ENCODE measurements at regions of chr7 and their contacts with region 1.

Region 1: GRCh38 chr7:44885394-44886317 is at the start of gene PURB:
- DNase-seq: peak; percentile 99
- H3K4me3 Mint-ChIP-seq: peak within 1 kb of the TSS; percentile 97
- H3K27ac Mint-ChIP-seq: peak within 1 kb of the TSS; percentile 99
- H3K4me1 Mint-ChIP-seq: peaks cover 42% of the 10 kb centered on the region
- H3K27me3 Mint-ChIP-seq: no peaks in the 10 kb centered on the region
- total RNA-seq, gene PURB: 41.4 and 41.5 TPM in 2 replicates

Region 2: GRCh38 chr7:44606450-44607254 is 279.0 kb before region 1 on chr7 and contains the start of gene OGDH:
- intact Hi-C with region 1: loop called (anchors 1 kb)
- DNase-seq: peak; percentile 100
- H3K4me3 Mint-ChIP-seq: peak within 1 kb of the TSS; percentile 99
- H3K27ac Mint-ChIP-seq: peak within 1 kb of the TSS; percentile 100
- H3K4me1 Mint-ChIP-seq: peaks cover 30% of the 10 kb centered on the region
- H3K27me3 Mint-ChIP-seq: peaks cover 11% of the 10 kb centered on the region
- total RNA-seq, gene OGDH: 99.5 and 102 TPM in 2 replicates

Region 3: GRCh38 chr7:44724276-44724675 is 161.4 kb before region 1 on chr7:
- intact Hi-C with region 1: no loop called
- DNase-seq: no peak
- H3K4me3 Mint-ChIP-seq: no peak overlapping the region
- H3K27ac Mint-ChIP-seq: no peak overlapping the region
- H3K4me1 Mint-ChIP-seq: peaks cover 4% of the 10 kb centered on the region
- H3K27me3 Mint-ChIP-seq: no peaks in the 10 kb centered on the region

Region 4: DNA sequence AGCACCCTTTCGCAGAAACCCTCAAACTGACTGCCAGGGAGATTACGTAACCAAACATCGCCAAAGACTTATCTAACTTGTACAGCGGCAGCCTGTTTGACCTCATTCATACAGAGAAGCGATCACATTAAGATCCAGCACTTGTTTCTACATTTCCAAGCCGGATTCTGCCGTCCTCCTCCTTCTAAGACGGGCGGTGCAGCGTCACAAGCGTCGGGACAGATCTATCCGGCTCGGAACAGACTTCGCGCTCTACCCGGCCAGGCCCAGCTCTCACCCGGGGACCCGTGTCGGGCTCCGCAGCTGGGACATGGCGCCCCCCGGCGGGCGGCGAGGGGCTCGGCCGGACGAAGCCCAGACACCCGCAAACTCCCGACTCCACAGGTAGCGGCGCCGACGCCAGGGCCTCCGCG is 38.1 kb before region 1 on chr7:
- intact Hi-C with region 1: loop called (anchors 1 kb)
- DNase-seq: peak; percentile 95
- H3K4me3 Mint-ChIP-seq: peak overlapping the region; percentile 99
- H3K27ac Mint-ChIP-seq: peak overlapping the region; percentile 98
- H3K4me1 Mint-ChIP-seq: peaks cover 52% of the 10 kb centered on the region
- H3K27me3 Mint-ChIP-seq: peaks cover 2% of the 10 kb centered on the region

Region 5: DNA sequence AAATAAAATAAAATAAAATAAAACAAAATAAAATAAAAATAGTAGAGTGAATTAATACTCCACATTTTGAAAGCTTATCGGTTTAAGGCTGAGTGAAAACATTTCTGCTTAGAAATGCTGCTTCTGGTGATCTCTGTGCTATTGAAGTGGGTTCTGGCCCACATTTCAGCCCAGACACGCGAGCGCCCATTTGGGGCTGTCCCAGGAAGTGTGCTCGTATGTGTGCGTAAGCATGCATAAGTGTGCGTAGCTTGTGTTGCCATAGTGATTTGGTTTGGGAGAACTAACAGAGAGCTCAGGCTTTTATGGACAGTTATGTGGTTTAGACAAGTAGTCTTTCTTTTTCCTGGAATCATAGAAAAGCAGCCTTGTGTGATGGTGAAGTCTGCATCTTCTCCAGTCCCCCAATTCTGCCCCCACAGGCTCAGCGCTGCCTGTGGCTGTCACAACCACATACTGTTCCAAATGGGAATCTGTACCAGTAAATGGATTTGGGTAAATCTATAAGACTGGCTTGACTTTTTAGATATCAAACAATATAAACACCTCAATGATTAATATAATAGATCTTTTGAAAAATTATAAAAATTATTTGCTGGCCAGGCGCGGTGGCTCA is 29.4 kb after region 1 on chr7:
- intact Hi-C with region 1: loop called (anchors 1 kb)
- DNase-seq: peak; percentile 95
- H3K4me3 Mint-ChIP-seq: peak overlapping the region; percentile 45
- H3K27ac Mint-ChIP-seq: peak overlapping the region; percentile 85
- H3K4me1 Mint-ChIP-seq: peaks cover 16% of the 10 kb centered on the region
- H3K27me3 Mint-ChIP-seq: no peaks in the 10 kb centered on the region

Region 6: GRCh38 chr7:44986218-44987053 is 100.8 kb after region 1 on chr7:
- intact Hi-C with region 1: loop called (anchors 1 kb)
- DNase-seq: peak; percentile 99
- H3K4me3 Mint-ChIP-seq: peak overlapping the region; percentile 99
- H3K27ac Mint-ChIP-seq: peak overlapping the region; percentile 99
- H3K4me1 Mint-ChIP-seq: peaks cover 55% of the 10 kb centered on the region
- H3K27me3 Mint-ChIP-seq: no peaks in the 10 kb centered on the region

Region 7: GRCh38 chr7:45111298-45112223 is 225.9 kb after region 1 on chr7 and contains the start of gene TBRG4:
- intact Hi-C with region 1: loop called (anchors 1 kb)
- DNase-seq: peak; percentile 99
- H3K4me3 Mint-ChIP-seq: peak within 1 kb of the TSS; percentile 98
- H3K27ac Mint-ChIP-seq: peak within 1 kb of the TSS; percentile 99
- H3K4me1 Mint-ChIP-seq: peaks cover 35% of the 10 kb centered on the region
- H3K27me3 Mint-ChIP-seq: peaks cover 21% of the 10 kb centered on the region
- total RNA-seq, gene TBRG4: 192 and 198 TPM in 2 replicates

Region 8: DNA sequence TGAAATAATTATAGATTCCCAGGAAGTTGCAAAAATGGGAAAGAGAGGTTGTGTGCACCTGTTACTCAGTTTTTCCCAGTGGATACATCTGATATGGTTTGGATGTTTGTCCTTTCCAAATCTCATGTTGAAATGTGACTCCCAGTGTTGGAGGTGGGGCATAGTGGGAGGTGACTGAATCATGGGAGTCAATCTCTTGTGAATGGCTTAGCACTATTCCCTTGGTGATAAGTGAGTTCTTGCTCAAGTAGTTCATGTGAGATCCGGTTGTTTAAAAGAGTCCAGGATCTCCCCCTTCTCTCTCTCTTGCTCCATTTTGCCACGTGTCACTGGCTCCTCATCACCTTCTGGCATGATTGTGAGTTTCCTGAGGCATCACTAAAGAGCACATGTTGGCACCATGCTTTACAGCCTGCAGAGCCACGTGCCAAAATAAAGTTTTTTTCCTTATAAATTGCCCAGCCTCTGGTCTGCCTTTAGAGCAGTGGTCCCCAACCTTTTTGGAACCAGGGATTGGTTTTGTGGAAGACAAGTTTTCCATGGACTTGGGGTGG is 421.2 kb after region 1 on chr7:
- intact Hi-C with region 1: no loop called
- DNase-seq: no peak
- H3K4me3 Mint-ChIP-seq: no peak overlapping the region
- H3K27ac Mint-ChIP-seq: no peak overlapping the region
- H3K4me1 Mint-ChIP-seq: no peaks in the 10 kb centered on the region
- H3K27me3 Mint-ChIP-seq: peaks cover 7% of the 10 kb centered on the region